A549 (cell line): ENCODE measurements at regions of chr7 and their contacts with region 1.

Region 1: DNA sequence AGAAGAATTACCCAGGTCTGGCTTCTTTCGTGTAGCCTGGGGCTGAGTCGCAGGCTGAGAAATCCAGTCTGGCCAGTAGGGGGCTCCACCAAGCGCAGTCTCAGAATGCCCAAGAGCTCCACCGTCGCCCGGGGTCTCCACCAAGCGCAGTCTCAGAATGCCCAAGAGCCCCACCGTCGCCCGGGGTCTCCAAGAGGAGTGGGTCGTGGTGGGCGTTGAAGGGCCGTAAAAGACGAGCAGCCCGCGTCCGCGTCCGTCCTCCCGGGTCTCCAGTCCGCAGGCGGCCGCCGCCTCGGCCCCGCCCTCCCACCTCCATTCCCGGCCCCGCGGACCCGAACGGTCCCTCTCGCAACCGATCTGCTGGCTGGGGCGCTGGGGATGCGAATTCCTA is 895 bp upstream of the ZYX start:
- DNase-seq: peak; percentile 83 to 89
- ATAC-seq: peak; percentile 64 to 82
- H3K4me3 ChIP-seq: peak overlapping the region; percentile 100
- H3K27ac ChIP-seq: peak overlapping the region; percentile 99 to 100
- H3K4me1 ChIP-seq: peaks cover 46% of the 10 kb centered on the region
- CTCF ChIP-seq: peak; percentile 85
- EP300 ChIP-seq: no peak
- POLR2A ChIP-seq: no peak
- RAD21 ChIP-seq: peak; percentile 26 to 60

Region 2: GRCh38 chr7:143321734-143322133 is 58.5 kb before region 1 on chr7:
- CTCF ChIA-PET with region 1: interaction called, 10 read pairs
- POLR2A ChIA-PET with region 1: no interaction called
- DNase-seq: peak in 1 of 2 experiments; percentile 24
- ATAC-seq: peak; percentile 78 to 87; a peak in 5 of 6 replicates
- H3K4me3 ChIP-seq: no peak overlapping the region
- H3K27ac ChIP-seq: no peak overlapping the region
- H3K4me1 ChIP-seq: peaks cover 20% of the 10 kb centered on the region
- CTCF ChIP-seq: peak; percentile 32; the same call in 1 of the 3 replicates
- EP300 ChIP-seq: no peak
- POLR2A ChIP-seq: no peak
- RAD21 ChIP-seq: peak; percentile 51 to 66; a peak in 4 of 5 replicates

Region 3: DNA sequence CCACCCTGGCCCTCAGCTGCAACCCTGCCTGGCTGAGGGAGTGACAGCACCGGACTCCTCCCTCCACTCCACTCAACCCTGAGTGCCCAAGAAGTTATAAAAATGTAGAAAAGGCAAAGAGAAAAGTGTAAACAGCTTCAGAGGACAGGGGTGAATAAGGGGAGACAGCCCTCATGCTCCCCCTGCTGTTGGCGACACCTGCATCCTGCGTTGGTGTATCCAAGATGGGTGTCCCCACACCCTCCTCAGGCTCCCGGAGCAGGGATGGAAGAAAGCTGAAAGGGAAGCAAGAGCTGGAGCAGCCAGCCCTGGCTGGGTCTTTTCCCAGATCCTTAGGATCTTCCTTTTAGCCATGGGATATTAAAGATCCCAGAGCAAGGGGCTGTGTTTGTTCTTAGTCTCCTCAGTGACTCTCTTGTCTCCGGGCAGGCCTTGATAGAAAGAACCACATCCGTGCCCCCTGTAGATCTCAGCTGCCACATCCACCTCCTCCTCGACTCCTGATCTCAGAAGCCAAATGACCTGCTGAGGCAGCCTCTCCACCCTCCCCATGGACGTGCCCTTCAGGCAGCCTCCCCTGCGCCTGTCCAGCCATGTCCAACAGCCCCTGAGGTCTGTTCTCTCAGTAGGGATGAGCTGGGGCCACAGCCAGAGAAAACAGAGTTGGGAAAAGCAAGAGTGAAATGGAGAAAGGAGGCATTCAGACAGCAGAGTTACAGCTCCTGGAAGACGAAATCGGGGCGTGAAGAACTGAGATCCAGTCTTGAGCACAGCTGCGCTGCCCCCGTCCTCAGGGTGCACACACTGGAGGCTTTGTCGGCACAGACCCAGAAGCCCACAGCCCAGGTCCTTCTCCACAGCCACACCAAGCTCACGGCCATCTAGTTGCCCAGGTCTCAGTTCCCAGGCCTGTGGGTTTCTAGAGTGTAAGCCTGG is 24.5 kb before region 1 on chr7:
- CTCF ChIA-PET with region 1: interaction called, 10 read pairs
- POLR2A ChIA-PET with region 1: no interaction called
- DNase-seq: peak in 1 of 2 experiments; percentile 12
- ATAC-seq: peak in 1 of 2 experiments; percentile 47; a peak in 2 of 6 replicates
- H3K4me3 ChIP-seq: no peak overlapping the region
- H3K27ac ChIP-seq: no peak overlapping the region
- H3K4me1 ChIP-seq: no peaks in the 10 kb centered on the region
- CTCF ChIP-seq: no peak
- EP300 ChIP-seq: no peak
- POLR2A ChIP-seq: no peak
- RAD21 ChIP-seq: 0 out of 5 replicates have a peak, but pooled peaks of 1 of the 2 experiments have one; percentile 7

Region 4: GRCh38 chr7:143391462-143392404 is 11.5 kb after region 1 on chr7:
- CTCF ChIA-PET with region 1: interaction called, 20 read pairs
- POLR2A ChIA-PET with region 1: interaction called, 3 read pairs
- DNase-seq: no peak
- ATAC-seq: no peak
- H3K4me3 ChIP-seq: no peak overlapping the region
- H3K27ac ChIP-seq: no peak overlapping the region
- H3K4me1 ChIP-seq: peaks cover 14% of the 10 kb centered on the region; the same call in 1 of the 3 replicates
- CTCF ChIP-seq: no peak
- EP300 ChIP-seq: no peak
- POLR2A ChIP-seq: no peak
- RAD21 ChIP-seq: no peak

Region 5: DNA sequence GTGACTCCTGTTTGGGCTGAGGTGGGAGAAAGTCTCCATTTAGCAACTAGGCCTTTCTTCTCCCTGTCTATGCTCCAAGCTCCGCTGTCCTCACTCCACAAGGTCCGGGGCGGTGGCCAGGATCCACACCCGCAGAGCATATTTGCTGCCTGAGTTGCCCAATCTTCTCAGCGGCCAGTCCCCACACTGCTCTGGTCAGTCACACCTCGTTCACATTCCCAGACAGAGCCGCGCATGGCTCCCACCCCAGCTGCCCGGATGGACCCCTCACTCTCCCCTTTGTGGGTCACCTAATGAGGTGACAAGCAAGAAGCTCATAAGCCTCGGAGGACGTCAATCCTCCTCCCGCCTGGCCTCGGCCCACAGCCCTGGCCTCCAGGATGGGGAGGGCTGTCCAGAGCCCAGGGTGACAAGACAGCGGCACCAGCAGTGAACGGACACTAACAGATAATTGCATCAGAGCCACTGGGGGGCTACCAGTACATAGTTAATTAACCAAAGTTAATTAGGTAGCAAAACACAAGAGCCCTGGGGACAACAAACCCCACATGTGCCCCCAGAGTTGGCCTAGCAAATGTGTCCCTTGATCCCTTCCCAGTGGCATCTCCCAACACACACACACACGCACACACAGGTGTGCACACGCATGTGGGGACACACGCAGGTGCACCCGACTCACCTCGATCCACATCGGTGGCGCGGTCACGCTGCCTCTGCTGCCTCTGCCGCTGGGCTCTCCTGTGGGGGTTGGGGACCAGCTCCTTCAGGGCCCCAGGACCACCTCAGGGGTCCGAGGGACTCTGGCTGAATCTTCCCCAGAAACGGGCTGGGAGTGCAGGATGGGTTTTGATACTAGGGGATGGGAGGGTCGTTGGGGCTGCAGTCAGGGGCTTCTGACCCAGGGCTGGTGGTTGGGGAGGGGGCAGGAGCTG is 16.6 kb after region 1 on chr7:
- CTCF ChIA-PET with region 1: interaction called, 24 read pairs
- POLR2A ChIA-PET with region 1: interaction called, 3 read pairs
- DNase-seq: no peak
- ATAC-seq: peak; percentile 3 to 5; a peak in 2 of 6 replicates
- H3K4me3 ChIP-seq: no peak overlapping the region
- H3K27ac ChIP-seq: no peak overlapping the region
- H3K4me1 ChIP-seq: peaks cover 10% of the 10 kb centered on the region; the same call in 1 of the 3 replicates
- CTCF ChIP-seq: no peak
- EP300 ChIP-seq: no peak
- POLR2A ChIP-seq: no peak
- RAD21 ChIP-seq: no peak

Region 6: DNA sequence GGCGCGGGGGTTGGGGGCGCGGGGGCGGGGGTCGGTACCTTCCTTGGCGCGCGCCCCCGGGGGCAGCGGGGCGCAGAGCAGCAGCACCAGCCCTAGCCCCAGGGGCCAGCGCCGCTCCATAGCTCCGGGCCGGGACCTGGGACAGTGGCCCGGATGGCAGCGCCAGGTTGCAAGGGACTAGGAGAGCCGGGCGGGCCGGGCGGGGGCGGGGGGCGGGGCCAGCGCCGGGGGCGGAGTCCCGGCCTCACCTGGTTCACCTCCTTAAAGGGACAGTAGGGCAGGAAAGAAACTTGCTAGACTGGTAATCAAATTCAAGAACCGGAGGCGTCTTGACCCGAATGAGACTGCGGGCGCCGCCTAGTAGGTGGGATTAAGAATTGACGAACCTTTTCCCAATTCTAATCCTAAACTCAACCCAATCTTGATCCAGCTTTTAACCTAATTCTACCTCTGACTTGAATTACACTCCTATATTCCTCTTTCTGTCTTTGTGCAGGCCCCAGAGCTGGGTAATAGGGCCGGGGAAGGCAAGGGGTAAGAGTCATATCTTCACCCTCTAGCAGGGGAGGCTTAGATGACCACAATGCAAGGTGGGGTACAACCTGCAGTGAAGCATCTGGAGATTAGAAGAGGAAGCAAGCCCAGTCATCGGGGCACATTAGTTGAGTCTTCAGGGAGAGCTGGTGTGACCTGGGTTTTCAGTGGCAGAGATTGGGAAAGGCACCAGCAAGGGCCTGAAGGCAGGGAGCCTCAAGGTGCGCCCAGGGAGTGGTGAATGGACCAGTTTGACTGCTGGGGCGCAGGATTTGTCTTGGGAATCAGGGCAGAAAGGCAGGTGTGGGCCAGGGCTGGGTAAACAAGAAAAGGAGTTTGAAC is 28.7 kb after region 1 on chr7 and contains the start of gene EPHA1:
- CTCF ChIA-PET with region 1: interaction called, 24 read pairs
- POLR2A ChIA-PET with region 1: no interaction called
- DNase-seq: peak in 1 of 2 experiments; percentile 65
- ATAC-seq: peak; percentile 38 to 57; a peak in 5 of 6 replicates
- H3K4me3 ChIP-seq: peak within 1 kb of the TSS; percentile 38
- H3K27ac ChIP-seq: peak within 1 kb of the TSS in 1 of 2 experiments; percentile 36; a peak in 1 of 6 replicates
- H3K4me1 ChIP-seq: peaks cover 7% of the 10 kb centered on the region; the same call in 2 of the 3 replicates
- CTCF ChIP-seq: peak; percentile 37
- EP300 ChIP-seq: no peak
- POLR2A ChIP-seq: no peak
- RAD21 ChIP-seq: peak in 1 of 2 experiments; percentile 35; a peak in 1 of 5 replicates
- polyA plus RNA-seq, gene EPHA1: not detected in 2 replicates

Region 7: GRCh38 chr7:143416565-143417149 is 36.4 kb after region 1 on chr7:
- CTCF ChIA-PET with region 1: interaction called, 21 read pairs
- POLR2A ChIA-PET with region 1: interaction called, 3 read pairs
- DNase-seq: peak; percentile 44 to 78
- ATAC-seq: peak in 1 of 2 experiments; percentile 79; a peak in 3 of 6 replicates
- H3K4me3 ChIP-seq: no peak overlapping the region
- H3K27ac ChIP-seq: no peak overlapping the region
- H3K4me1 ChIP-seq: peaks cover 5% of the 10 kb centered on the region; the same call in 1 of the 3 replicates
- CTCF ChIP-seq: peak; percentile 81
- EP300 ChIP-seq: no peak
- POLR2A ChIP-seq: no peak
- RAD21 ChIP-seq: peak; percentile 79 to 80